Naive thymus-derived CD4-positive, alpha-beta T cell (primary cell): ENCODE measurements at regions of chrX and their contacts with region 1.

Region 1: GRCh38 chrX:149962859-149963757 is 24.8 kb upstream of the EOLA2 start:
- DNase-seq: peak in 3 of 9 donors; percentile 10 to 24 (median 11)
- ATAC-seq: peak; percentile 51
- H3K4me3 ChIP-seq: no peak overlapping the region
- H3K4me3 Mint-ChIP-seq: no peak overlapping the region
- H3K27ac ChIP-seq: no peak overlapping the region
- H3K27ac Mint-ChIP-seq: no peak overlapping the region
- H3K4me1 ChIP-seq: no peaks in the 10 kb centered on the region
- H3K4me1 Mint-ChIP-seq: peaks cover 0 to 4% (median 0%) of the 10 kb centered on the region in 7 donors
- H3K27me3 ChIP-seq: no peaks in the 10 kb centered on the region
- H3K27me3 Mint-ChIP-seq: no peaks in the 10 kb centered on the region

Region 2: DNA sequence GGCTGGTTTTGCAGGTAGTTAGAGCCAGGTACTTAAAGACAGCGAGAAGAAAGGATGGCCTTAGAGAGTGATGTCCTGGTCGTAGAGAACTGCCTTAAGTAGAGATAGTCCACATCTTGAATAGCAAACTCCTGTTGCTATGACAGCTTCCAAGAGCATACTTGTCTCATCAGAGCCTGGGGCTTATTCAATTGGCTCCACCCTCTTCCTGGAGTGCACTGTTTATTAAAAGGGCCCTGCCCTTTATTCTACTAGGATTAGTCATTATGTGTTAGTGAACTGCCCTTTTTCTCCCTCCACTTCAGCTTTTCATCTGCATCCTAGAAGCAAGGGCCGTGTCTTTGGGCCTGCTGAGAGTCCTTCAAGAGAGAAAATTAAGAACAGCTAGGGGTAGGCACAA is 69.6 kb after region 1 on chrX:
- CTCF ChIA-PET with region 1: no interaction called
- POLR2A ChIA-PET with region 1: no interaction called
- intact Hi-C with region 1: no loop called
- DNase-seq: no peak
- ATAC-seq: no peak
- H3K4me3 ChIP-seq: no peak overlapping the region
- H3K4me3 Mint-ChIP-seq: no peak overlapping the region
- H3K27ac ChIP-seq: no peak overlapping the region
- H3K27ac Mint-ChIP-seq: no peak overlapping the region
- H3K4me1 ChIP-seq: no peaks in the 10 kb centered on the region
- H3K4me1 Mint-ChIP-seq: peaks cover 1 to 14% (median 8%) of the 10 kb centered on the region in 7 donors
- H3K27me3 ChIP-seq: no peaks in the 10 kb centered on the region
- H3K27me3 Mint-ChIP-seq: peaks cover 0 to 16% (median 0%) of the 10 kb centered on the region in 5 donors

Region 3: DNA sequence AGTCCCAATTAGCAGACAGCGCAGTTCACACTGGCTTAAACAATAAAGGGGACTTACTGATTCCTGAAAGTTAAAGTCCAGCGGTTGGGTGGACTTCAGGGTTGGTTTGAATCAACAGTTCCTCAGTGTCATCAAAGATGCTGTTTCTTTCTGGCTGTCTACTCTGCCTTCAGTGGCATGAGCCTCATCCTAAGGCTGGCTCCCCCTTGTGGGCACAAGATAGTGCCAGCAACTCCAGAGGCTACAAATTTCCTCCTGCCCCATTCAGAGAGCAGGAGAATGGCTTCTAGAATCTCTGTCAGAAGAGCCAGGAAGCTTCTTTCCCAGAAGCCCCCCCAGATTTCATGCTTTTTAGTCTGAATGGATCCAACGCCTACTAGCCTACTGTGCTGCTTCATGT is 522.9 kb after region 1 on chrX:
- CTCF ChIA-PET with region 1: no interaction called
- POLR2A ChIA-PET with region 1: no interaction called
- intact Hi-C with region 1: loop called in 1 of 2 experiments (anchors 2 kb)
- DNase-seq: peak in 8 of 9 donors; percentile 7 to 46 (median 34)
- ATAC-seq: peak; percentile 74
- H3K4me3 ChIP-seq: no peak overlapping the region
- H3K4me3 Mint-ChIP-seq: no peak overlapping the region
- H3K27ac ChIP-seq: no peak overlapping the region
- H3K27ac Mint-ChIP-seq: no peak overlapping the region
- H3K4me1 ChIP-seq: no peaks in the 10 kb centered on the region
- H3K4me1 Mint-ChIP-seq: peaks cover 0 to 48% (median 0%) of the 10 kb centered on the region in 7 donors
- H3K27me3 ChIP-seq: no peaks in the 10 kb centered on the region
- H3K27me3 Mint-ChIP-seq: no peaks in the 10 kb centered on the region

Region 4: DNA sequence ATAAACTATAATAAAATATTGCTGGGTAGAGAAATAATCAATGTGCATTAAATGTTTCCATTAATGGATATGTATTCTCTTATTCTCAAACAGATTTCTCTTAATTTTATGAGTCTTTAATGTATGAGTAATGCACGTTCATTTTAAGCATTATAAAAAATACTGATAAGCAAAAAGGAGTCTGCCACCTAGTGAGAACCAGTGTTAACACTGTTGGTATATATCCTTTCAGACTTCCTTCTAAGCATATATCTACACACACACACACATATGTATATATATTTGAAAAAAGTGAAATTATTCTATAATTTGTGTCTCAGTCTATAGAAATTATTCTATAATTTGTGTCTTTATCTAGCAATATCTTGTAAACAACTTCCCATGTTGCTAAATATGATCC is 680.2 kb after region 1 on chrX:
- CTCF ChIA-PET with region 1: no interaction called
- POLR2A ChIA-PET with region 1: no interaction called
- intact Hi-C with region 1: loop called in 1 of 2 experiments (anchors 5 kb)
- DNase-seq: no peak
- ATAC-seq: no peak
- H3K4me3 ChIP-seq: no peak overlapping the region
- H3K4me3 Mint-ChIP-seq: no peak overlapping the region
- H3K27ac ChIP-seq: no peak overlapping the region
- H3K27ac Mint-ChIP-seq: no peak overlapping the region
- H3K4me1 ChIP-seq: no peaks in the 10 kb centered on the region
- H3K4me1 Mint-ChIP-seq: no peaks in the 10 kb centered on the region
- H3K27me3 ChIP-seq: no peaks in the 10 kb centered on the region
- H3K27me3 Mint-ChIP-seq: no peaks in the 10 kb centered on the region

Region 5: DNA sequence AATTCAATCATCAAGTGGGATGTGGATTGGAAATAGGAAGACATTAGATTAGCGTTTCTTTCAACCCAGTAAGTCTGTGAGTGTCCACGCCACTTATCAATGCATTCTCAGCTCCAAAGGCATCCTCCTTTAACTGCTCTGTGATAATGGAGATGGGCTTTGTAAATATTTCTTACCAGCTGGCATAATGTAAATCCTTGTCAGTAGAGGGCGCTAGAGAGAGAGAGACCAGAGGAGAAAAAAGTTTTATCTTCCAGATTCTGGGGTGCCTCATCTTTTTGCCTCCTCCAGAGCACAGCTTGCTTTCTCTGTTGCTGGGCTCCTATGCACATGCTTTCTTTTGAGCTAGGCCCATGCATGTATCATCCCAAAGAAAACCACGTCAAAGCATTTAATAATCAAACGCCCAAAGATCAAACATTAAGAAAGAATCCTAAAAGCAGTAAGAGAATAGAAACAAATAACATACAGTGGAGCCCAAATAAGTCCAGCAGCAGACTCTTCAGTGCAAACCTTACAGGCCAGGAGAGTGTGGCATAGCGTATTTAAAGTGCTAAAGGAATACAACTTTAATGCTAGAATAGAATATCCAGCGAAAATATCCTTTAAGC is 720.5 kb after region 1 on chrX:
- CTCF ChIA-PET with region 1: no interaction called
- POLR2A ChIA-PET with region 1: no interaction called
- intact Hi-C with region 1: loop called in 1 of 2 experiments (anchors 2 kb)
- DNase-seq: peak in 7 of 9 donors; percentile 36 to 68 (median 60)
- ATAC-seq: peak; percentile 72
- H3K4me3 ChIP-seq: no peak overlapping the region
- H3K4me3 Mint-ChIP-seq: no peak overlapping the region
- H3K27ac ChIP-seq: no peak overlapping the region
- H3K27ac Mint-ChIP-seq: peak overlapping the region in 2 of 9 donors; percentile 32 to 42
- H3K4me1 ChIP-seq: peaks cover 0 to 6% of the 10 kb centered on the region in 2 donors
- H3K4me1 Mint-ChIP-seq: peaks cover 8 to 32% (median 12%) of the 10 kb centered on the region in 7 donors
- H3K27me3 ChIP-seq: no peaks in the 10 kb centered on the region
- H3K27me3 Mint-ChIP-seq: no peaks in the 10 kb centered on the region